HepG2 (cell line): ENCODE measurements at regions of chr1 and their contacts with region 1.

Region 1: GRCh38 chr1:1959840-1960479 is 40.9 kb upstream of the TMEM52 start:
- DNase-seq: peak; percentile 81
- ATAC-seq: peak; percentile 81
- H3K4me3 ChIP-seq: peak overlapping the region in 2 of 3 experiments; percentile 23 to 51; a peak in 2 of 6 replicates
- H3K27ac ChIP-seq: no peak overlapping the region
- H3K4me1 ChIP-seq: peaks cover 86% of the 10 kb centered on the region
- H3K27me3 ChIP-seq: peaks cover 2 to 57% of the 10 kb centered on the region in 2 experiments; a peak in 4 of 5 replicates
- CTCF ChIP-seq: peak; percentile 98
- EP300 ChIP-seq: peak in 1 of 2 experiments; percentile 62; a peak in 1 of 4 replicates
- POLR2A ChIP-seq: no peak; a peak in 1 of 4 replicates
- RAD21 ChIP-seq: peak; percentile 90

Region 2: DNA sequence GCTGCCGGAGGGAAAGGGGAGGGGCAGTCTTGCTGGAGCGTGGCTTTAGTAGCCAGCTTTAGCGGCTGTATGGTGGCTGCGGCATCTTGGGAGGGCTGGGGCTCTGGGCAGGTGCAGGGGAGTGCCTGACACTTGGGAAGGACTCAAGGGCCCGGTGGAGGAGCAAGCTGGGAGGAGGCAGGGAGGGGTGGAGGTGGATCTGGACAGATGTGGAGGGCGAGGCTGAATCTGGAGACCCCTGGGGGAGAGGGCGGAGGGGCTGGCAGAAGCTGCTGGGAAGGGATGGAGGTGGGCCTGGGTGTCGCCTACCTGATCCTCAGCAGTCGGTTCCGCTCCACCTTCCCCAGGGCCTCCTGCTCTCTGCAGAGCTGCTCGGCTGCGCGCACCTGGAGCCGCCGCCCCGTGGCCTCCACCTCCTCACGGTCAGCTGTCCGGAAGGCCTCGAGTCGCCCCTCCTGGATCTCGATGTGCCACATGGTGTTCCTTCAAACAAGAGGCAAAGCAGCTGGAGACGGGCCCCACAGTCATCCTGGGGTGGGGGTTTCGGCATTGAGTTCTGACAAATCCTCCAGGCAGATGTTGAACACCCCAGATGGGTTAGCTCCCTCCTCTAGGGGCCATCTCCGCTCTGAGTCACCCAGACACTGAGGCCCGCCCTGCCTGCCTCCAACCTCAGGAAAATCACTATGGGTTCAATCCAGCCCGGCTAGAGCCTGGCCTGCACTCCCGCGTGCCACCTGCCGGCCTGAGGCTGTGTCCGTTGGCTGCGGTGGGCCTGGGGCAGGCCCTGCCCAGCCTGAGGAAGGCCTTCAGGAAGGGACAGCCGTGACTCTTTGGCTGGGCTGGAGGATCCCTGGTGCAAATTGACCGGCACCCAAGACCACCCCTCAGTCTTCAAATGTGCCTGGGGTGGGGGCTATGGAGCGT is 14.0 kb after region 1 on chr1:
- CTCF ChIA-PET with region 1: interaction called, 6 read pairs
- POLR2A ChIA-PET with region 1: no interaction called
- in situ Hi-C with region 1: no loop called
- intact Hi-C with region 1: loop called (anchors 1 kb)
- DNase-seq: no peak
- ATAC-seq: peak; percentile 84
- H3K4me3 ChIP-seq: no peak overlapping the region
- H3K27ac ChIP-seq: no peak overlapping the region
- H3K4me1 ChIP-seq: no peaks in the 10 kb centered on the region
- H3K27me3 ChIP-seq: peaks cover 17 to 51% of the 10 kb centered on the region in 2 experiments; a peak in 4 of 5 replicates
- CTCF ChIP-seq: peak; percentile 74
- EP300 ChIP-seq: no peak
- POLR2A ChIP-seq: no peak
- RAD21 ChIP-seq: peak; percentile 65